ENCODE measurements at regions of chr4 and their contacts with region 1.

Region 1: GRCh38 chr4:143482840-143483239 is 30.7 kb upstream of the SMARCA5 start:
- DNase-seq: peak; percentile 71
- ATAC-seq: peak; percentile 56
- H3K4me3 ChIP-seq: no peak overlapping the region
- H3K27ac ChIP-seq: no peak overlapping the region
- H3K4me1 ChIP-seq: no peaks in the 10 kb centered on the region
- H3K27me3 ChIP-seq: no peaks in the 10 kb centered on the region
- CTCF ChIP-seq: peak; percentile 84
- POLR2A ChIP-seq: no peak
- RAD21 ChIP-seq: peak; percentile 92

Region 2: GRCh38 chr4:142846729-142847596 is 635.9 kb before region 1 on chr4:
- CTCF ChIA-PET with region 1: no interaction called
- POLR2A ChIA-PET with region 1: no interaction called
- dilution Hi-C with region 1: no loop called
- in situ Hi-C with region 1: no loop called
- intact Hi-C with region 1: loop called (anchors 10 kb)
- DNase-seq: no peak
- ATAC-seq: peak; percentile 19; the same call in 1 of the 2 replicates
- H3K4me3 ChIP-seq: peak overlapping the region; percentile 61
- H3K27ac ChIP-seq: peak overlapping the region; percentile 25; the same call in 1 of the 2 replicates
- H3K4me1 ChIP-seq: no peaks in the 10 kb centered on the region
- H3K27me3 ChIP-seq: peaks cover 10% of the 10 kb centered on the region
- CTCF ChIP-seq: no peak
- POLR2A ChIP-seq: no peak
- RAD21 ChIP-seq: no peak

Region 3: DNA sequence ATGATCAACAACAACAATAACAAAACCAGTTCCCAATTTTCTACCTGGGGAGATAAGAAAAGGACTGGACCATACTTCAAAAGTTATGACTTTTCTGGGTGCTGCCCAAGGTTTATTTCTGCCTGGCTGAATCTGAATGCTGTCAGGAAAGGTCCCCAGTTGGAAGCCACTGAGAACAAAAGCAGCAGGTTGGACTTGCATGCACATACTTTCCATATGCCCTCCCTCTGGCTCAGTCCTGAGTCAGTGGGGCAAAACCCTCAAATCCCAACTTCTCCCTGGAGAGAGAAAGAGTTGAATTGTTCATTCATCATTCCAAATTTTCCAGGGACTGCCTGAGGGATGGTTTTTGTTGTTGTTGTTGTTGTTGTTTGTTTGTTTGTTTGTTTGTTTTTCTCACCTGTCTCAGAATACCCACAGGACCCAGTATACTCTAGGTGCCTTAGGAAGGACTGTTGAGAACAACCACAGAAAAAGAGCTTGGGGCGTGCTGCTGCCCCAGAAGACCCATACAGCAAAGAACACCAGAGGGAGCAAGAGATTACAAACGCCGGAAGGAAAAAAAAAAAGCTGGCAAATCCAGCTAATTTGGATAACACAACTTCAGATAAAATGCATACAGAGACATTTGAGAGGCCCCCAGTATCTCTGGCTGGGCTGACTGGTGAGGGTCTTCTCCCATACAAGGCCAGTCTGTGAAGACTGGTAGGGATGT is 497.8 kb before region 1 on chr4:
- CTCF ChIA-PET with region 1: no interaction called
- POLR2A ChIA-PET with region 1: no interaction called
- dilution Hi-C with region 1: no loop called
- in situ Hi-C with region 1: no loop called
- intact Hi-C with region 1: loop called (anchors 5 kb)
- DNase-seq: peak; percentile 17
- ATAC-seq: peak; percentile 44
- H3K4me3 ChIP-seq: no peak overlapping the region
- H3K27ac ChIP-seq: no peak overlapping the region
- H3K4me1 ChIP-seq: no peaks in the 10 kb centered on the region
- H3K27me3 ChIP-seq: peaks cover 5% of the 10 kb centered on the region
- CTCF ChIP-seq: peak; percentile 43
- POLR2A ChIP-seq: no peak
- RAD21 ChIP-seq: peak; percentile 35

Region 4: GRCh38 chr4:143207557-143207956 is 275.3 kb before region 1 on chr4:
- CTCF ChIA-PET with region 1: interaction called, 5 read pairs
- POLR2A ChIA-PET with region 1: no interaction called
- dilution Hi-C with region 1: no loop called
- in situ Hi-C with region 1: loop called (anchors 5 kb)
- intact Hi-C with region 1: loop called (anchors 1 kb)
- DNase-seq: peak; percentile 50
- ATAC-seq: peak; percentile 59
- H3K4me3 ChIP-seq: no peak overlapping the region
- H3K27ac ChIP-seq: no peak overlapping the region
- H3K4me1 ChIP-seq: no peaks in the 10 kb centered on the region
- H3K27me3 ChIP-seq: no peaks in the 10 kb centered on the region
- CTCF ChIP-seq: peak; percentile 36; the same call in 1 of the 2 replicates
- POLR2A ChIP-seq: no peak
- RAD21 ChIP-seq: peak; percentile 31; the same call in 1 of the 2 replicates

Region 5: DNA sequence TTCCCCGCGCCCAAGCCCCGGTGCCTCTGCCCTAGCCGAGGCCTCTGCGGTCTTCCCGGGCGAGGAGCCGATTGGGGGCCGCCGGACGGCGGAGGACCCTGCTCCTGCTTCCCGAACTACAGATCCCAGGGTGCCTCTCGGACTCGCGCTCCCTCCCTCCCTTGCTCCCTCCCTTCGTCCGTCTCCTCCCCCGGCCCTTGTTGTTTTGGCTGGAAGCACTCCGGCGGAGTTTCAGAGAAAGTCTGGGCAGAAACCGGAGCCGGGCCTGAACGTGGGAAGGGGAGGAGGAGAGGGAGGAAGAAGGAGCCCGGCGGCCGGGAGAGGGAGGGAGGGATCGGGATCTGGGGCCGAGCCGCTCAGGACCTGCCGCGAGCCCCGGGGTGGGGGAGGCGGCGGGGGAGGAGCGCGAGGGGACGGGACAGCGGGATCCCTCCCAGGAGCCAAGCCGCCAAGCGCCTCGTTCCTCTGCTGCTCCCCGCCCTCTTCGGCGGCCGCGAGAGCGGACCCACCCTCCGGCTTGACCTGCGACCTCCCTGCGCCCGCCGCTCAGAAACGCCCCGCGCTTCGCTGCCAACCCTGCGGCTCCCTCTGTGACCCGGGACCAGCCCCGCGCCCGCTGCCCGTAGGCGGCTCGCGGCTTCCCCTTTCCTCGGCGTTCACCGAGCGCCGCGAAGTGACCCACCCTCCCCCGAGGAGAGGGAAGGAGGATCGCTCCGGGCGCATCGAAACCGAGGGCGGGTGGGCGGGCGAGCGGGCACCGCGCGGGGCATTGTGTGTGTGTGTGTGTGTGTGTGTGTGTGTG is 146.7 kb before region 1 on chr4:
- CTCF ChIA-PET with region 1: no interaction called
- POLR2A ChIA-PET with region 1: no interaction called
- dilution Hi-C with region 1: no loop called
- in situ Hi-C with region 1: no loop called
- intact Hi-C with region 1: loop called (anchors 2 kb)
- DNase-seq: peak; percentile 90
- ATAC-seq: peak; percentile 86
- H3K4me3 ChIP-seq: peak overlapping the region; percentile 94
- H3K27ac ChIP-seq: peak overlapping the region; percentile 93
- H3K4me1 ChIP-seq: peaks cover under 1% of the 10 kb centered on the region; the same call in 1 of the 2 replicates
- H3K27me3 ChIP-seq: no peaks in the 10 kb centered on the region
- CTCF ChIP-seq: no peak
- POLR2A ChIP-seq: peak; percentile 54
- RAD21 ChIP-seq: no peak

Region 6: GRCh38 chr4:143375313-143376073 is 107.3 kb before region 1 on chr4:
- CTCF ChIA-PET with region 1: interaction called, 6 read pairs
- POLR2A ChIA-PET with region 1: no interaction called
- dilution Hi-C with region 1: no loop called
- in situ Hi-C with region 1: no loop called
- intact Hi-C with region 1: loop called (anchors 5 kb)
- DNase-seq: no peak
- ATAC-seq: peak; percentile 82
- H3K4me3 ChIP-seq: no peak overlapping the region
- H3K27ac ChIP-seq: no peak overlapping the region
- H3K4me1 ChIP-seq: peaks cover 8% of the 10 kb centered on the region
- H3K27me3 ChIP-seq: no peaks in the 10 kb centered on the region
- CTCF ChIP-seq: peak; percentile 50
- POLR2A ChIP-seq: no peak
- RAD21 ChIP-seq: peak; percentile 59

Region 7: DNA sequence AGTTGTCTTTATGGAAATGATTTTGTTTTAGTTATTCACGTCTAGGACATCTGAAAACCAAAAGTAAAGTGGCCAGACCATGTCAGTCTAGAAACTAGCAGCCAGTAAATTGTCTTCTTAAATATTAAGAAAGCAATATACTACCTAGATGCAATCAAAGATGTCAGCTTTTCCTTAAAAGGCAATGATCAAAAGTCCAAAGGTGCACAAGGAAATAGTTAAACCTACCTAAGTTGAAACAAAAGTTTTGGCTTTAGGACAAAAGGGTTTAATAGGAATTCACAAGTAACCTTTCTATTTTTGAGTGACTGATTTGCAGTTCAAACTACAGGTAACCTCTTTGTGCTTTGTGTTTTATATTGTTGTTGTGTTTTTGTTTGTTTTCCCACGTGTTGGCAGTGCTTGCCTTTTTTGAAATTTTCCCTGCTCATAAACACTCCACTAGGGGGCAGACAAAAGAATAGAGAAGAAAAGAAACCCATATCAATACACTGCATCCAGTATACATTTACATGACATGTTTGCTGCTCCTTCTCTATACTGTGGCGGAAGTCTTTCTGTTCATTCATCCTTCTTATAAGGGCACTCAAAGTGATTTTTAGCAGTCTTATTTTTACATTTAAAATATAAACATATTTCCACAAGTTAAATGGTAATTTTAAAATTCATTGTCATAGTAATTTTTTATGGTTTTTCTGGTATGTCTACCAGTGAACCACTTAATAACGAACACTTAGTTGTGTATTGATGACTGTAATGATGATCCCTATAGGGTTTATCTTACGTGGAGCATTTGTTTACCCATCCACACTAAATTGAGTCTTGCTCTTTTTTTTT is 83.5 kb before region 1 on chr4:
- CTCF ChIA-PET with region 1: no interaction called
- POLR2A ChIA-PET with region 1: no interaction called
- dilution Hi-C with region 1: no loop called
- in situ Hi-C with region 1: no loop called
- intact Hi-C with region 1: loop called (anchors 5 kb)
- DNase-seq: peak; percentile 21
- ATAC-seq: no peak
- H3K4me3 ChIP-seq: no peak overlapping the region
- H3K27ac ChIP-seq: no peak overlapping the region
- H3K4me1 ChIP-seq: peaks cover 7% of the 10 kb centered on the region
- H3K27me3 ChIP-seq: no peaks in the 10 kb centered on the region
- CTCF ChIP-seq: peak; percentile 48
- POLR2A ChIP-seq: no peak
- RAD21 ChIP-seq: peak; percentile 25; the same call in 1 of the 2 replicates